Transverse colon (tissue), 4 donors: ENCODE measurements at regions of chr9 and their contacts with region 1.

Region 1: GRCh38 chr9:11072176-11072575 is 459.4 kb upstream of the PTPRD start:
- DNase-seq: no peak
- H3K4me3 ChIP-seq: no peak overlapping the region
- H3K27ac ChIP-seq: no peak overlapping the region
- H3K4me1 ChIP-seq: no peaks in the 10 kb centered on the region
- H3K27me3 ChIP-seq: no peaks in the 10 kb centered on the region
- CTCF ChIP-seq: no peak
- EP300 ChIP-seq: no peak
- POLR2A ChIP-seq: no peak

Region 2: DNA sequence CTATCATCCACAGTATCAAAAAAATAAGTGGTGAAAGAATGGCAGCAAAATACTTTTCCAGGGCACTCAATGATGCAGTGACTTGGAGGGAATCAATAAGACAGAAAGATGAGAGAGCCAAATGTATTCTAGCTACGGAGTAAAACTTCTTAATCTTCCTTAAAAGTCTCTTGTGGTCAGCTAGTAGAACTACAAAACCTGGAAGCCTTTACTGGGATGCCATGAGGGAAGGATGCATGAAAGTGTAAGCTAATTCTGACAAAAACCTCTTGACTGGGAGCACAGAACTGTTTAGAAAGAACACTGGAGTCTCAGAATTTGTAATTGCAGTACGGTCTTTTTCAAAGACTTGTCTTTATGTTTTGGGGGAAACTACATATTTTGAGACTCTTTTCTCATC is 26.6 kb before region 1 on chr9:
- in situ Hi-C with region 1: loop called in 1 of 4 experiments (anchors 5 kb)
- intact Hi-C with region 1: no loop called
- DNase-seq: no peak
- H3K4me3 ChIP-seq: no peak overlapping the region
- H3K27ac ChIP-seq: no peak overlapping the region
- H3K4me1 ChIP-seq: no peaks in the 10 kb centered on the region
- H3K27me3 ChIP-seq: no peaks in the 10 kb centered on the region
- CTCF ChIP-seq: no peak
- EP300 ChIP-seq: no peak
- POLR2A ChIP-seq: no peak